Naive thymus-derived CD4-positive, alpha-beta T cell (primary cell): ENCODE measurements at regions of chr18 and their contacts with region 1.

Region 1: DNA sequence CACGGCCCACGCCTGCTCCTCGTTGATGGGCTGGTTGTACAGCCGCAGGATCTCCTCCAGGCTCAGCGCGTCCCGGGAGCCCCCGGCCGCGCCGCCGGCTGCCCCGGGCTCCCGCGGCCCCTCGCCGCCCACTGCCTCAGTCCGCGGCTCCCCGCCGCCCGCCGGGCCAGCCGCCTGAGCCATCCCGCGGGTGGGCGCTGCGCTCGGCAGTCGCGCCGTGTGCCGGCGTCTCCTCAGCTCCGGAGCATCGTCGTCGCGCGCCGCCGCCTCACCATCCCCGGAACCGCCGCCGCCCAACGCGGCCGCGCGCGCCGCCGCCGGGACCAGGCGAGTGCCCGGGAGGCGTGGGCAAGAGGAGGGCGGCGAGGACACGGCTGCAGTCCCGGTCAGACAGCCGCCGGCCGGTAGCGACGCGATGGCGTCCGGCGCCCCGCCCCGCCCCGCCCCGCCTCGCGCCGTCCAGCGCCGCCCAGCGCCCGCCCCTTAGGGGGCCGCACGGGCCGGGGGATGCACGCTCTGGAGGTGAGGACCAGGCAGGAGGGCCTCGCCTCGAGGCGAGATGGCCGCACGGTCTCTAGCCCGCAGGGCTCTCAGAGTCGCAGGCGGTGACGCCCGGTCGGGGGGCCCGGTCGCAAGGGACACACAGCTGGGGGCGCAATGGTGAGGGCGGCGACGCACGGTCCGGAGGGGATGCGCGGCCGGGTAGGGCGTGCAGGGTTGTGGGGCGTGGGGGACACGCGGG is at the start of gene SPIRE1:
- DNase-seq: peak in 7 of 9 donors; percentile 16 to 65 (median 27)
- ATAC-seq: peak; percentile 76
- H3K4me3 ChIP-seq: peak within 1 kb of the TSS; percentile 55
- H3K4me3 Mint-ChIP-seq: peak within 1 kb of the TSS; percentile 80 to 97 (median 90)
- H3K27ac ChIP-seq: no peak within 1 kb of the TSS
- H3K27ac Mint-ChIP-seq: peak within 1 kb of the TSS in 6 of 9 donors; percentile 23 to 81 (median 64)
- H3K4me1 ChIP-seq: peaks cover 7 to 10% of the 10 kb centered on the region in 2 donors
- H3K4me1 Mint-ChIP-seq: peaks cover 14 to 31% (median 15%) of the 10 kb centered on the region in 7 donors
- H3K27me3 ChIP-seq: no peaks in the 10 kb centered on the region
- H3K27me3 Mint-ChIP-seq: peaks cover 0 to 27% (median 16%) of the 10 kb centered on the region in 5 donors
- total RNA-seq, gene SPIRE1: 0.97 to 2.9 (median 1.6) TPM

Region 2: GRCh38 chr18:12271376-12272235 is 386.2 kb before region 1 on chr18:
- CTCF ChIA-PET with region 1: interaction called, 3 read pairs
- POLR2A ChIA-PET with region 1: no interaction called
- intact Hi-C with region 1: loop called in 1 of 2 experiments (anchors 2 kb)
- DNase-seq: peak in 8 of 9 donors; percentile 19 to 69 (median 48)
- ATAC-seq: peak; percentile 75
- H3K4me3 ChIP-seq: peak overlapping the region; percentile 37
- H3K4me3 Mint-ChIP-seq: peak overlapping the region; percentile 10 to 74 (median 67)
- H3K27ac ChIP-seq: no peak overlapping the region
- H3K27ac Mint-ChIP-seq: peak overlapping the region in 1 of 9 donors; percentile 39
- H3K4me1 ChIP-seq: no peaks in the 10 kb centered on the region
- H3K4me1 Mint-ChIP-seq: peaks cover 0 to 7% (median 4%) of the 10 kb centered on the region in 7 donors
- H3K27me3 ChIP-seq: no peaks in the 10 kb centered on the region
- H3K27me3 Mint-ChIP-seq: peaks cover 0 to 23% (median 16%) of the 10 kb centered on the region in 5 donors

Region 3: DNA sequence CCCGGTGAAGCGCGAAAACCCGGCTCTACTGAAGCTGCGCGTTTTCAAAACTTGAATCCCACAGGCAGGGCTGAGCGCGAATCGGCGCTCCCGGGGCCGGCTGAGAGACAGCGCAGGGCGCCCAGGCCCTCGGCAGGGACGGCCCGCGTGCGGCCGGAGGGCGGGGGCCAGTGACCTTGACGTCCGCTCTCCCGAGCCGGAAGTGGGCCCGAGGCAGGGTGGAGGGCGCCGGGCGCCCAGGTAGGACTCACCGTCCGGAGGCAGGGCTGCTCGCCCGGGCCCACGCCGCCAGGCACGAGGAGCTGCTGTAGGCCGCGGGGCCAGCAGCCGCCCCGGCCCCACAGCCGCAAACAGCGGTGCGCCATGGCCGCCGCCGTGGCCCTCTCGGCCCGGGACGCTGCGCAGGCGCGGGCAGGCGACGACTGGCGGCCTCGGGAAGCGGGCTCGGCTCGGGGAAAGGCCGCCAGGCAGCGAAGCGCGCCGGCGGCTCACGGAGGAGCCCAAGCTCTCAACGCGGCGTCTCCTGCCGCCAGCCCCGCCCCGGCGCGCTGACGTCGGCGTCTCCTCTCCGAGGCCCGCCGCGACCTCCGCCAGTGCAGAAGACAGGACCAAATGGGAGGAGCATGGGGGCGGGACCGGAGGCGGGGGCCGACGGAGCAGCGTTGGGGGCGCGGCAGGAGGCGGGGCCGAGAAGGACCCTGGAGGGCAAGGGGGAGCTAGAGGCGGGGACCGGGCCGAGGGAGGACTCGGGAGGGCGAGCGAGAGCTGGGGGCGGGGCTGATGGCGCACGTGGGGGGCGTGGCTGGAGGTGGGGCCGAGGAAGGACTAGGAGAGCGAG is 280.9 kb before region 1 on chr18 and contains the start of gene AFG3L2:
- CTCF ChIA-PET with region 1: no interaction called
- POLR2A ChIA-PET with region 1: no interaction called
- intact Hi-C with region 1: loop called in 1 of 2 experiments (anchors 1 kb)
- DNase-seq: peak; percentile 99 to 100 (median 100)
- ATAC-seq: peak; percentile 93
- H3K4me3 ChIP-seq: peak within 1 kb of the TSS; percentile 93
- H3K4me3 Mint-ChIP-seq: peak within 1 kb of the TSS; percentile 85 to 93 (median 92)
- H3K27ac ChIP-seq: peak within 1 kb of the TSS; percentile 97
- H3K27ac Mint-ChIP-seq: peak within 1 kb of the TSS; percentile 77 to 95 (median 90)
- H3K4me1 ChIP-seq: peaks cover 13 to 28% of the 10 kb centered on the region in 2 donors
- H3K4me1 Mint-ChIP-seq: peaks cover 32 to 52% (median 46%) of the 10 kb centered on the region in 7 donors
- H3K27me3 ChIP-seq: no peaks in the 10 kb centered on the region
- H3K27me3 Mint-ChIP-seq: peaks cover 0 to 22% (median 0%) of the 10 kb centered on the region in 5 donors
- total RNA-seq, gene AFG3L2: 26.3 to 42.3 (median 32.0) TPM

Region 4: GRCh38 chr18:12408247-12408869 is 249.5 kb before region 1 on chr18:
- CTCF ChIA-PET with region 1: no interaction called
- POLR2A ChIA-PET with region 1: no interaction called
- intact Hi-C with region 1: loop called in 1 of 2 experiments (anchors 5 kb)
- DNase-seq: no peak
- ATAC-seq: no peak
- H3K4me3 ChIP-seq: no peak overlapping the region
- H3K4me3 Mint-ChIP-seq: peak overlapping the region; percentile 42 to 88 (median 62)
- H3K27ac ChIP-seq: no peak overlapping the region
- H3K27ac Mint-ChIP-seq: peak overlapping the region in 4 of 9 donors; percentile 18 to 65 (median 40)
- H3K4me1 ChIP-seq: peaks cover 9 to 13% of the 10 kb centered on the region in 2 donors
- H3K4me1 Mint-ChIP-seq: peaks cover 10 to 30% (median 25%) of the 10 kb centered on the region in 7 donors
- H3K27me3 ChIP-seq: no peaks in the 10 kb centered on the region
- H3K27me3 Mint-ChIP-seq: peaks cover 7 to 41% (median 25%) of the 10 kb centered on the region in 5 donors

Region 5: DNA sequence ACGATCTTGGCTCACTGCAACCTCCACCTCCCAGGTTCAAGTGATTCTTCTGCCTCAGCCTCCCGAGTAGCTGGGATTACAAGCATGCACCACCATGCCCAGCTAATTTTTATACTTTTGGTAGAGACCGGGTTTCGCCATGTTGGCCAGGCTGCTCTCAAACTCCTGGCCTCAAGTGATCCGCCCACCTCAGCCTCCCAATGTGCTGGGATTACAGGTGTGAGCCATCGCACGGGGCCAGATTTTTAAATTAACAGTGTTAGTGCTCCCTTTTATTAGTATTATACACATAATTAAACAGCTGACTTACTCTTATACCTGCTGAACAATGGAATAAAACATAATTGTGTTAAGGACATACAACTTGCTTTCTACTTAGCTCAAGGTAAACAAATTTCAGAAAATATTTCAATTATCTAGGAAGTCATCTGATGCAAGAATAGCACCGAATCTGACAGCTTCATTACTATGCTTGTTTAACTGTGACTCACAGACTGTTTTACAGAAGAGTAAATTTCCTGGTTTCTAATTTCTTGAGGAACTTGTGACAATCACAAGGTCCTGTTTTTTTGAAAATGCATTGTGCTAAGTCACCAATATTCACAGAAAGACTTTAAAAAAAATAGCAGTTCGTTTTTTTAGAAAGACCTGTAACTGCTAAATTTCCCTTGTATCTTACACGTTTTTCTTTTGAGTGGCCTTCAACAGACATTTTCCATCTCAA is 51.1 kb before region 1 on chr18:
- CTCF ChIA-PET with region 1: no interaction called
- POLR2A ChIA-PET with region 1: no interaction called
- intact Hi-C with region 1: no loop called
- DNase-seq: no peak
- ATAC-seq: peak; percentile 75
- H3K4me3 ChIP-seq: no peak overlapping the region
- H3K4me3 Mint-ChIP-seq: no peak overlapping the region
- H3K27ac ChIP-seq: no peak overlapping the region
- H3K27ac Mint-ChIP-seq: no peak overlapping the region
- H3K4me1 ChIP-seq: no peaks in the 10 kb centered on the region
- H3K4me1 Mint-ChIP-seq: peaks cover 0 to 13% (median 3%) of the 10 kb centered on the region in 7 donors
- H3K27me3 ChIP-seq: no peaks in the 10 kb centered on the region
- H3K27me3 Mint-ChIP-seq: peaks cover 0 to 14% (median 7%) of the 10 kb centered on the region in 5 donors

Region 6: GRCh38 chr18:12702221-12703095 is 44.6 kb after region 1 on chr18 and contains the starts of genes CEP76 and PSMG2:
- CTCF ChIA-PET with region 1: no interaction called
- POLR2A ChIA-PET with region 1: no interaction called
- intact Hi-C with region 1: loop called in 1 of 2 experiments (anchors 5 kb)
- DNase-seq: peak; percentile 77 to 88 (median 84)
- ATAC-seq: peak; percentile 89
- H3K4me3 ChIP-seq: peak within 1 kb of the TSS; percentile 97
- H3K4me3 Mint-ChIP-seq: peak within 1 kb of the TSS; percentile 92 to 99 (median 98)
- H3K27ac ChIP-seq: peak within 1 kb of the TSS; percentile 96
- H3K27ac Mint-ChIP-seq: peak within 1 kb of the TSS; percentile 91 to 100 (median 96)
- H3K4me1 ChIP-seq: peaks cover 17 to 20% of the 10 kb centered on the region in 2 donors
- H3K4me1 Mint-ChIP-seq: peaks cover 36 to 63% (median 50%) of the 10 kb centered on the region in 7 donors
- H3K27me3 ChIP-seq: no peaks in the 10 kb centered on the region
- H3K27me3 Mint-ChIP-seq: no peaks in the 10 kb centered on the region
- total RNA-seq, gene CEP76: 6.9 to 13.2 (median 11.1) TPM
- total RNA-seq, gene PSMG2: 49.9 to 104 (median 59.9) TPM